H1 (cell line): ENCODE measurements at regions of chr5 and their contacts with region 1.

Region 1: DNA sequence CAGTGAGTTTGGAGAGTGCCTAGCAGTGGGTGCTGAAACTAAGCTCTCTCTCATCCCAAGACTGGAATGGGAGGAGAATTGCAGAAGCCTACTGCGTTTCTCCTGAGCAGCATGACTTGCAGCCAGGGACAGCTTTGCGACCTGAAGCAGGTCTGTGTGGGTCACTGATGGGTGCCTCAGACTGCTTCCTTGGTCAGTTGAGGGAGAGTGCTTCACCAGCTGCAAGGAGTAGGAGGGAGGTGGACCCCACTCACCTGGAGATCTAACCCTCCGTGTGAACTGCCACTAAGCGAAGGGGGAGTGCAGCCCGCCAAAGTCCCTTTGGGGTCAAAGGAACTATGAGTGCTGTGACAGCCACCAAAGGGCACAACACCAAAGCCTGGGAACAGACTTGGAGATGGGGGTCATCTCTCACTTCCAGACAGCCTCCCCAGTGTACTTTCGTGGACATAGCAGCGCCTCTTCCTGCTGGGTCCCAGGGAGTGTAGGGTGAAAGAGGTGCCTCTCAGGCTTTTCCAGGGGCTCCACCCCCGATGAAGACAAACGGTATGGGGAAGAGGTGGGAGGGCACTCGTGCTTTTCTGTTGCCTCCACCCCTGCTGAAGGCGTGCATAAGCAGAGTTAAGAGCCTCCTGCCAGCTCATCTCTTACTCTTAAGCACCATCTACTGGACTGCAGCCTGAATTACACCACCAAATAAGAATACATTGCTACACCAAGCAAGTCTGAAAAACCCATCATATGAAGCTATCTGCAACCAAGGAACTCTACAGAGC is 34.3 kb upstream of the MACIR start:
- DNase-seq: peak; percentile 66 to 68
- H3K4me3 ChIP-seq: peak overlapping the region in 1 of 4 experiments; percentile 26; a peak in 2 of 8 replicates
- H3K27ac ChIP-seq: no peak overlapping the region
- H3K4me1 ChIP-seq: peaks cover 0 to 4% (median 3%) of the 10 kb centered on the region in 4 experiments; a peak in 5 of 7 replicates
- H3K27me3 ChIP-seq: no peaks in the 10 kb centered on the region
- CTCF ChIP-seq: peak in 2 of 3 experiments; percentile 61 to 90; a peak in 3 of 4 replicates
- EP300 ChIP-seq: no peak
- POLR2A ChIP-seq: no peak
- RAD21 ChIP-seq: peak; percentile 86 to 87

Region 2: GRCh38 chr5:102971697-102972293 is 252.5 kb before region 1 on chr5:
- CTCF ChIA-PET with region 1: interaction called, 17 read pairs
- POLR2A ChIA-PET with region 1: no interaction called
- DNase-seq: no peak
- H3K4me3 ChIP-seq: no peak overlapping the region
- H3K27ac ChIP-seq: no peak overlapping the region
- H3K4me1 ChIP-seq: no peaks in the 10 kb centered on the region
- H3K27me3 ChIP-seq: no peaks in the 10 kb centered on the region
- CTCF ChIP-seq: peak in 2 of 3 experiments; percentile 22 to 29; a peak in 2 of 4 replicates
- EP300 ChIP-seq: no peak
- POLR2A ChIP-seq: no peak
- RAD21 ChIP-seq: peak; percentile 37 to 48; a peak in 3 of 4 replicates

Region 3: GRCh38 chr5:103203226-103203625 is 21.1 kb before region 1 on chr5:
- CTCF ChIA-PET with region 1: interaction called, 22 read pairs
- POLR2A ChIA-PET with region 1: no interaction called
- DNase-seq: no peak
- H3K4me3 ChIP-seq: no peak overlapping the region
- H3K27ac ChIP-seq: no peak overlapping the region
- H3K4me1 ChIP-seq: no peaks in the 10 kb centered on the region
- H3K27me3 ChIP-seq: no peaks in the 10 kb centered on the region
- CTCF ChIP-seq: no peak
- EP300 ChIP-seq: no peak
- POLR2A ChIP-seq: no peak
- RAD21 ChIP-seq: no peak

Region 4: GRCh38 chr5:103258368-103258956 is 34.2 kb after region 1 on chr5 and contains the start of gene MACIR:
- CTCF ChIA-PET with region 1: interaction called, 22 read pairs
- POLR2A ChIA-PET with region 1: interaction called, 6 read pairs
- DNase-seq: peak; percentile 90 to 97
- H3K4me3 ChIP-seq: peak within 1 kb of the TSS; percentile 61 to 94 (median 88)
- H3K27ac ChIP-seq: peak within 1 kb of the TSS; percentile 78
- H3K4me1 ChIP-seq: peaks cover 0 to 6% (median 0%) of the 10 kb centered on the region in 4 experiments; a peak in 1 of 7 replicates
- H3K27me3 ChIP-seq: no peaks in the 10 kb centered on the region
- CTCF ChIP-seq: no peak
- EP300 ChIP-seq: no peak
- POLR2A ChIP-seq: peak; percentile 65 to 79
- RAD21 ChIP-seq: peak in 1 of 2 experiments; percentile 13; a peak in 2 of 4 replicates
- total RNA-seq, gene MACIR: 17.7 and 19.2 TPM in 2 replicates